Calu3 (cell line): ENCODE measurements at regions of chr14 and their contacts with region 1.

Region 1: DNA sequence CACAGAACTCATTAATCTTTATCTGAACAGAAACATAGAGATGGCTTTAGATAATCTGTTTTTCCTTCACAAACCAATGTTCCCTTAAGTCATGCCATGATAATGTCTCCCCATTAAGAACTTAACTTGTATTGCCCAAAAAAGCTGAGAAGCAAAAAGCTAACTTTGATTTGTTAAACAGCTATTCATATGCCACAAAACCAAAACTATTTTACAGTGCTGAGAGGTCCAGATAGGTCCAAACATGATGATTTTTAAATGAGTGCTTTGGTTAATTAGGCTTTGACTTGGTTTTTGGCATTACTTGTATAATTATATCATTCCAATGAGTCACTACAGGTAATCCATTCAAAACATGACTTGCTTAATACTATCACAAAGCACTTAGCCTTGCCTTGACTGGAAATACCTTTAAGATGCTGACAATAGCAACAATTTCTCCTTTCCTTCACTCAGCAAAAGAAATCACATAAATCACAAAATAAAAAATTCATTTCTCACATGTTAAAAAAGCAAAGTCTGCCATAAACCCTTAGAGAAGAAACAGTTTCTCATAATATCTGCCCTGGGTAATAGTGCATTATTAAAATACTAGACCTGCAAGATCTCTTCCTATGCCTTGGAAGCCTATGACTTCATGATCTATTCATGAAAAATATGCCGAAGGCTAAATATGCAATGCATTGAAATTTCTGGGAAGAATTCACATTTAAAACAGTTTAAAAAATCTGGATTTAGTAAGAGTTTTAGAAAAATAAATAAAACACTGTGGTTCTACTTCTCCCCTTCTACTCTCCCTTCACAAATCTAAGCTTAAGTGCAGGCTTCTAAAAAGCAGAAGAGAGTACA is 52.0 kb upstream of the SAV1 start:
- DNase-seq: no peak
- H3K4me3 Mint-ChIP-seq: no peak overlapping the region
- H3K27ac Mint-ChIP-seq: no peak overlapping the region
- H3K4me1 Mint-ChIP-seq: no peaks in the 10 kb centered on the region
- H3K27me3 Mint-ChIP-seq: no peaks in the 10 kb centered on the region
- CTCF ChIP-seq: no peak

Region 2: DNA sequence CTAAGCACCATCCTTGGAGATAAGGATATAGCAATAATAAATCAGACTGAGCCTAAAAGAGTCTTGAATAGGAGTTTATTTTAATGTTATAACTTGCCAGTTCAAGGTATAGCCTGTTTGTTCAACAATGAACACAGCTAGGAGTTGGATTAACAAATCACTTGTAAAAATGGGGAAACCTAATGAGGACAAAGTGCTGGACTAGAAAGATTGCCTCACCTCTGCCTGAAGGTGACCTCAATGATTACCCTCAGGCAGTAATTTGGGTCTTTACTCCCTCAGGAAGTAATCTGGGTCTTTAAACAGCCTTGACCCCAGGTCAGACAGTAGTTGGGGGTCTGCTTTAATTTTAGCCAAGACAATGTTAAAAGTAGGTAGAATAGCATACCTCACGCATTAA is 288.0 kb before region 1 on chr14:
- CTCF ChIA-PET with region 1: no interaction called
- intact Hi-C with region 1: no loop called
- DNase-seq: no peak
- H3K4me3 Mint-ChIP-seq: no peak overlapping the region
- H3K27ac Mint-ChIP-seq: no peak overlapping the region
- H3K4me1 Mint-ChIP-seq: peaks cover 9% of the 10 kb centered on the region
- H3K27me3 Mint-ChIP-seq: no peaks in the 10 kb centered on the region
- CTCF ChIP-seq: no peak

Region 3: GRCh38 chr14:50619556-50620141 is 100.5 kb before region 1 on chr14:
- CTCF ChIA-PET with region 1: interaction called, 3 read pairs
- intact Hi-C with region 1: loop called (anchors 5 kb)
- DNase-seq: no peak
- H3K4me3 Mint-ChIP-seq: no peak overlapping the region
- H3K27ac Mint-ChIP-seq: no peak overlapping the region
- H3K4me1 Mint-ChIP-seq: no peaks in the 10 kb centered on the region
- H3K27me3 Mint-ChIP-seq: no peaks in the 10 kb centered on the region
- CTCF ChIP-seq: peak; percentile 43

Region 4: GRCh38 chr14:51283402-51284085 is 563.4 kb after region 1 on chr14:
- CTCF ChIA-PET with region 1: no interaction called
- intact Hi-C with region 1: no loop called
- DNase-seq: peak; percentile 26
- H3K4me3 Mint-ChIP-seq: no peak overlapping the region
- H3K27ac Mint-ChIP-seq: no peak overlapping the region
- H3K4me1 Mint-ChIP-seq: no peaks in the 10 kb centered on the region
- H3K27me3 Mint-ChIP-seq: no peaks in the 10 kb centered on the region
- CTCF ChIP-seq: peak; percentile 57